ENCODE measurements at regions of chr6 and their contacts with region 1.

Region 1: DNA sequence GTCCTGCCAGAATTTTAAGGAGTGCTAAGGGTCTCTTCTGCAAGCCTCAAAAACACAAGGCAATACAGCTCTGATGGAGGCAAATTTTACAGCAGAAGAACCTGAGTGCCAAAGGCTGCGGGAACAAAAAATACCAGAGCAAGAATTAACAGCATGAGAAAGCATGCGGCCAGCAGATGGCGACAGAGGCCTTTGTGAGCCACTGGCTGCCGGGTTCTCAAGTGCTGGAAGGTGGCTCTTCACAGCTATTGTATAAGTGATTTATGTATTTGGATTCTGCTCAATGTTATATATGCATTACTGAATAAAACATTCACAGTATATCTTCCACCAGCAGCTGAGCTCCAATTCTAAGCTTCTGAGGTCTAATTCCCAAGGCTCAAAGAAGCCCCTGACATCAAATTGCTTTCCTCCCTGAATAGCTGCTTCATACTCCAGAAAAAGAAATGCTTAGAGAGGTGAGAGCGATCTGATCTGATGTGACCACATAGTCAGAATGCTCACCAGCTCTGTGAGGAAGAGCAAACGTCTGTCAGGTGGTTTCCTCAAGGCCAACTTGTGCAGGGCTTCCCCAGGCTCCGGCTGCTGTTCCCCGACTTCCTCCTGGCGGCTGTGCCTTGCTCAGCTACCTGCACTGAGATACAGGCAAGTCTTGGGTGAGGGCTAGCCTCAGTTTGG is 58.6 kb downstream of the PPP1R3G start:
- DNase-seq: peak; percentile 63
- H3K4me3 ChIP-seq: no peak overlapping the region
- H3K27ac ChIP-seq: no peak overlapping the region
- H3K27me3 ChIP-seq: no peaks in the 10 kb centered on the region
- CTCF ChIP-seq: peak; percentile 94

Region 2: DNA sequence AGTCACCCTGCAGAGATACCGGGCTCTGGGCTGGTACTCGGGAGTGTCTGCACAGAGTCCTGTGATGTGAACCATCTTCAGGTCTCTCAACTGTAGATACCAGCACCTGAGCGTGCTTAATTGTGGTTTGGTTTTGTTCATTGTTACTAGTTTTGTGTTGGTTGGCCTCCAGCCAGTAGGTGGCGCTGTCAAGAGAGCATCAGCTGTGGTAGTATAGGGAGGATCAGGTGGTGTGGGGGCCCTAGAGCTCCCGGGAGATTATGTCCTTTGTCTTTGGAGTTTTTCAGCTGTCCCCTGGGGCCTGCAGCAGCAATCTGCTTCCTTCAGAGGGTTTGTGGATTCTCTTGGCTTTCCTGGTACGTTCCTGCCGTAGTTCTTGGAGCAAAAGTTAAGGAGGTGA is 299.7 kb before region 1 on chr6:
- CTCF ChIA-PET with region 1: no interaction called
- POLR2A ChIA-PET with region 1: no interaction called
- DNase-seq: no peak
- H3K4me3 ChIP-seq: no peak overlapping the region
- H3K27ac ChIP-seq: no peak overlapping the region
- H3K27me3 ChIP-seq: no peaks in the 10 kb centered on the region
- CTCF ChIP-seq: no peak

Region 3: DNA sequence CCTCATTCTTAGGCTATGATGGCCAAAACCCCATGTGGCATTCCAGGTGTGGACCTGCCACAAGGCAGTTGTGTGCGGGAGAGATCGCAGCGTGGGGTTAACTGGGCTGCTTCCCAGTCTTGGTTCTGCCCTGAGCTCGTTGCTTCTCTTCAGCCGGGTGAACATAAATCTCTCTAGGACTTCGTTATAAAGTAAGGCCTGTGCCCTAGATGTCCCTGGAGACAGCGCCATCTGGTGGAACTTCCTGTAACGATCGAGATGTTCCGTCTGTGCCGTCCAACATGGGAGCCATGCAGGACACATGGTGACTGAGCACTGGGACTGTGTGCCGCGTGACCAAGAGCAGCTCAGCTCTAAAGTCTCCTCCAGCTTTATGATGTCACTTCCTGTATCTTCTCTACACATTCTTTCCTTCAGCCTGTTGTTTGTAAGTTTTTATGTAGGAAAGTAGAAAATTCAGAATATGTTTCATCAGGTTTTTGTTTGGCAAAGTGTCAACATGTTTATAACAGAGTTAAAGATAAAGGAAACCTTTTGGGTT is 113.1 kb before region 1 on chr6:
- CTCF ChIA-PET with region 1: no interaction called
- POLR2A ChIA-PET with region 1: no interaction called
- DNase-seq: no peak
- H3K4me3 ChIP-seq: no peak overlapping the region
- H3K27ac ChIP-seq: no peak overlapping the region
- H3K27me3 ChIP-seq: no peaks in the 10 kb centered on the region
- CTCF ChIP-seq: peak; percentile 66

Region 4: GRCh38 chr6:5055118-5055517 is 88.7 kb before region 1 on chr6:
- CTCF ChIA-PET with region 1: interaction called, 13 read pairs
- POLR2A ChIA-PET with region 1: no interaction called
- DNase-seq: no peak
- H3K4me3 ChIP-seq: no peak overlapping the region
- H3K27ac ChIP-seq: no peak overlapping the region
- H3K27me3 ChIP-seq: peaks cover 3% of the 10 kb centered on the region
- CTCF ChIP-seq: no peak

Region 5: DNA sequence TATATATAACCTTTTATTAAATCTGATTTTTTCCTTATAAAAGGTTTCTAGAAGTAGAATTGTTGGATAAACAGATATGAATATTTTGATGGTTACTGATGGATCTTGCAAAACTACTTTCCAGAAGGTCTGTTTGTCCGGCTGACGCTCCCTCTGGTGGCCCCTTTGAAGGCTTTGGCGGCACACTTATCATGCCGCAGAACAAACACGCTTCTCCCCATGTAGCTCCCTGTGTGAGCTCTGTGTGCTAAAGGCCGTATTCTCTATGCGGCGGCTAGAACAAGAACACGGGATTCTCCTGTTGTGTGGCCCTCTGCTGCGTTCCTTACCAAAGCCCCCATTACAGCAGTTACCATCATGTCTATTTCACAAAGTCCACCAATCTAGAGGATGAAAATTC is 28.6 kb before region 1 on chr6:
- CTCF ChIA-PET with region 1: no interaction called
- POLR2A ChIA-PET with region 1: no interaction called
- DNase-seq: no peak
- H3K4me3 ChIP-seq: no peak overlapping the region
- H3K27ac ChIP-seq: no peak overlapping the region
- H3K27me3 ChIP-seq: no peaks in the 10 kb centered on the region
- CTCF ChIP-seq: peak; percentile 43

Region 6: DNA sequence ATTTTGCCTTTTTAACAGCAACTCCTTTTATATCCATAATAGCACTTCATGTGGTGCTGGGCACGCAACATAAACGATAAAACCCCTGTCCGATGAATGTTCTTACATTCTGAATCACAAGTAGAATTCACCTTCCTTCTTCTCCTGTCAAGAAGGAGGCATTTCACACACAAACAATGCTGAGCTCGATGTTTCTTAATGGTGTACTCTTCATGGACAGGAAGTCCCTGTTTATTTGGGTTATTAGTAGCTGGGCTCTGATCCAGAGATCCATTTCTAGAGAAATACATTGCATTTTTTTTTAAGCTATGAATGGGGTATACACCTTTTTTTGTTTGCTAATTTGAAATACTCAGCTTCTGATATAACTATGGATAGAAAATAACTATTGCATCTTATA is 23.7 kb after region 1 on chr6:
- CTCF ChIA-PET with region 1: interaction called, 30 read pairs
- POLR2A ChIA-PET with region 1: no interaction called
- DNase-seq: no peak
- H3K4me3 ChIP-seq: no peak overlapping the region
- H3K27ac ChIP-seq: no peak overlapping the region
- H3K27me3 ChIP-seq: no peaks in the 10 kb centered on the region
- CTCF ChIP-seq: no peak

Region 7: GRCh38 chr6:5214570-5215052 is 70.8 kb after region 1 on chr6:
- CTCF ChIA-PET with region 1: interaction called, 14 read pairs
- POLR2A ChIA-PET with region 1: interaction called, 8 read pairs
- DNase-seq: peak; percentile 54
- H3K4me3 ChIP-seq: no peak overlapping the region
- H3K27ac ChIP-seq: peak overlapping the region; percentile 33
- H3K27me3 ChIP-seq: no peaks in the 10 kb centered on the region
- CTCF ChIP-seq: peak; percentile 69

Region 8: GRCh38 chr6:5379647-5380242 is 236.0 kb after region 1 on chr6:
- CTCF ChIA-PET with region 1: interaction called, 49 read pairs
- POLR2A ChIA-PET with region 1: no interaction called
- DNase-seq: no peak
- H3K4me3 ChIP-seq: no peak overlapping the region
- H3K27ac ChIP-seq: no peak overlapping the region
- H3K27me3 ChIP-seq: no peaks in the 10 kb centered on the region
- CTCF ChIP-seq: peak; percentile 69

Region 9: DNA sequence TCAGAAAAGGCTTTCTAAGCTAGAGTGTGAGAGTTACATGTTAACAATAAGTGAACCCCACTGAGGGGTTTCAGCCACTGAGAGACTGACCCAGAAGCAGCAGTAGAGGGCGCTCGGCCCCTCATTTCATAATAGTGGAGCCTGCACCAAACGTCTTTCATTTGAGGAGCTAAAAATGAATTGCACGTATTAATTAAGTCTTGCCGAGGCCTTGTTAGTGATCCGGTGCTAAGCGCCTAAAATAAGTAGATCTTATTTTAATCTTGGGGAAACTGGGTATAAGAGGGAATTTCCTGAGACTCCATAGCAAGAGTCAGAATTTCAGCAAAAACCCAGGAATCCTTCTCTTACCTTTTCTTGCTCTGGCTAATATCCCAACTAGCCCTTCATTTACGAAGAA is 327.3 kb after region 1 on chr6:
- CTCF ChIA-PET with region 1: interaction called, 10 read pairs
- POLR2A ChIA-PET with region 1: no interaction called
- DNase-seq: peak; percentile 29
- H3K4me3 ChIP-seq: no peak overlapping the region
- H3K27ac ChIP-seq: no peak overlapping the region
- H3K27me3 ChIP-seq: no peaks in the 10 kb centered on the region
- CTCF ChIP-seq: peak; percentile 94